ENCODE measurements at regions of chr5 and their contacts with region 1.

Region 1: GRCh38 chr5:131634996-131635754 is at the start of gene RAPGEF6:
- DNase-seq: peak; percentile 97
- H3K4me3 Mint-ChIP-seq: peak within 1 kb of the TSS; percentile 98
- H3K27ac Mint-ChIP-seq: peak within 1 kb of the TSS; percentile 97
- H3K4me1 Mint-ChIP-seq: peaks cover 33% of the 10 kb centered on the region
- H3K27me3 Mint-ChIP-seq: no peaks in the 10 kb centered on the region
- total RNA-seq, gene RAPGEF6: 36.7 and 42.8 TPM in 2 replicates

Region 2: DNA sequence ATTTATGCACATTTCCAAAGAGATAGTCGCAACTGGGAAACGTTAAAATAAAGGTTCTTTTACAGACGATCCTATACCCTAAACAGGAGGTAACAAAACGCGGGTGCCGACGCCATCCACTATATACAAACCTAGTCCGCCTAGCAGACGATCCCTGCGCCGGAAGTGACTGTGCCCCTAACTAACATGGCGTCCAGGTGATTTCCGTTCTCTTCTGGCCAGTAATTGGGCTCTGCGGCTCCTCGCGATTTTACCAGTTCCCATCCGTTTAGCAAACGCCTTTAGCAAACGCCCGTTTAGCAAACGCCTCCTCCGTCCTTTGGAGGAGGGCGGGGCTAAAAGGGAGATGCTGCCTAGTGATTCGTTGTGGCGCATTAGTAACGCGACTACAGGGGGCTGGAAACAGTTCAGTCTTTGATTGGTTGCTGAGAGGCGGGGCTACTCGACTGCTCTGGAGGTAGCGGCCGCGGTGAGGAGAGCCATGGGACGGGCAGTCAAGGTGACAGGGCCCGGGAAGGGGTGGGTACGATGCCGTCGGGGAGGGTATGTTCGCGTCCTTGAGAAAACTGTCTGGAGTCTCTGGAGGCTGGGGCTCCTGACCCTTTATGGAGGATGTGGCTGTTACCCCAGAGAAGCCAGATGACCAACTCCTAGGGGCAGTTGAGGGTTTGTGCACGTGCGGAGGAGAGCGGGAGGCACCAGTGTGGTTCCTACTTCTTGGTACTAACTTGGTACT is 464.5 kb before region 1 on chr5 and contains the start of gene LYRM7:
- intact Hi-C with region 1: loop called (anchors 1 kb)
- DNase-seq: peak; percentile 96
- H3K4me3 Mint-ChIP-seq: peak within 1 kb of the TSS; percentile 99
- H3K27ac Mint-ChIP-seq: peak within 1 kb of the TSS; percentile 98
- H3K4me1 Mint-ChIP-seq: peaks cover 51% of the 10 kb centered on the region
- H3K27me3 Mint-ChIP-seq: no peaks in the 10 kb centered on the region
- total RNA-seq, gene LYRM7: 13.7 and 15.8 TPM in 2 replicates

Region 3: DNA sequence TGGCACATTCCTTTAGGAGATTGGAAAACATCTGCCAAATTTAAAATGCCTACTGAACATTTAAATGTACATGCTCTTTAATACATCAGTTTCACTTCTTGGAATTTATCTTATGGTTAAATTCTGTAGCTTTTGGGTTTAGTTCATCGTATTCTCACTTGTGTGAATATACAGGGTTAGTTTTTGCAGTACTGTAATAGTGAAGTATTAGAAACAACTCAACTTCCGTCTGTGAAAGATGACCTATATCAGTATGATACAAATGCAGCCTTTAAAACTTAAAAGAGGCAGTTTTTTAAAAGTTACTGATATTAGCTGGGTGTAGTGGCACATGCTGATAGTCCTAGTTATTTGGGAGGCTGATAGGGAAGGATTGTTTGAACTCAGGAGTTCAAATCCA is 314.1 kb before region 1 on chr5:
- intact Hi-C with region 1: no loop called
- DNase-seq: no peak
- H3K4me3 Mint-ChIP-seq: no peak overlapping the region
- H3K27ac Mint-ChIP-seq: no peak overlapping the region
- H3K4me1 Mint-ChIP-seq: peaks cover 74% of the 10 kb centered on the region
- H3K27me3 Mint-ChIP-seq: no peaks in the 10 kb centered on the region

Region 4: DNA sequence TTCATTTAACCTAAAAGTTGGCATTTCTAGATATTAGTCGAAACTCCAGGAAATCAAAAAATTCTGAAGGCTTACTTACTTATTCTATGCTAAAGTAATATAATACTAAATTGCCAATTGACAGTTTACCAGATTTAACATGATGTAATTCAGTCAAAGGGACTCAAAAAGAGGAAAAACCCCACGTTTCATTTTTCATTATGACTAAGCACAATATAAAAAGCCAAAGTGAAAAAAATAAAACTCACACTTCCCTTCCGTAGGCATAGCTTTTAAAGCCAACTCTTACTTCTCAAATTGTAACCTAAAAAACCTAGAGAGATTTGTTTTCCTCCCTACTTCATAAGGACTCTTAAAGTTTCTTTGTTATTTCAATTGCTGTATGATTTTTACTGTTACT is 146.7 kb before region 1 on chr5:
- intact Hi-C with region 1: loop called (anchors 2 kb)
- DNase-seq: no peak
- H3K4me3 Mint-ChIP-seq: no peak overlapping the region
- H3K27ac Mint-ChIP-seq: no peak overlapping the region
- H3K4me1 Mint-ChIP-seq: peaks cover 16% of the 10 kb centered on the region
- H3K27me3 Mint-ChIP-seq: no peaks in the 10 kb centered on the region

Region 5: DNA sequence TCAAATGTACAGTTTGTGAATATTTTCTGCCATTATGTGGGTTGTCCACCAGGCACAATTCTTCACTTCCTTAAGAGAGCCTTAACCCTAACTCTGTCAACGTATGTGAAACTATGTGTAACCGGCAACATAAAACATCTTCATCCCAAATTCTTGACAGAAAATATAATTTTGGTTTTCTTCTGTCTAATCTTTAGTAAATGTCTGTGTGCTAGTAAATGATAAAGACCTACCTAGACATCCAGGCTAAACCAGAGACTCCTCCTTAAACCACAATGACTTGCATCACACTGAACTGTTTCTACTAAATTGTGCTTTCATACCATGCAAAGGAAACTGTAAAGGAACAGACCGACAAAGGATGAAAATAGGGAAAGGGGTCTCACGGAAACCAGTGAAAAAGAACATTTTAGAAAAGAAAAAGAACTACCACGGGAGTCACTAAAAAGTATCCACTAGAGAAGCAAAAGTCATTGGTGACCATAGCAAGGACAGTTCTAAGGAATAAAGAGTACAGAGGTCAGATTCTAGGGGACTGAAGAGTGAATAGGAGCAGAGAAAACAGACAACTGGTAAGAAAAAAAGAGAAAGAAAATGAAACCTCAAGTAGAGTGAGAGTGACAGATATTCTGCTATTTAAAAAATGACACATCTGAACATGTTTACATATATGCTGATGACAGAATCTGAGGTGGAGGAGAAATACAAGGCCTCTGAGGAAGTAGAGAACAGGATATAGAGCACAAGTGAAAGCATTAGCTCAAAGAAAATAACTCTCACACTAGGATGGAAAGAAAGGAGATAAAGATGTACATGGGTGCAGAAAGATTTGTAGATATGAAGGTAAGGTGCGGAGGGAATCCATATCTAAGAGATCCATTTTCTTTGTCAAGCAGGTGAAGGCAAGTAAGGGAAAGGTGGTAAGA is 112.3 kb after region 1 on chr5:
- intact Hi-C with region 1: loop called (anchors 2 kb)
- DNase-seq: no peak
- H3K4me3 Mint-ChIP-seq: peak overlapping the region; percentile 40
- H3K27ac Mint-ChIP-seq: peak overlapping the region; percentile 85
- H3K4me1 Mint-ChIP-seq: peaks cover 40% of the 10 kb centered on the region
- H3K27me3 Mint-ChIP-seq: no peaks in the 10 kb centered on the region

Region 6: DNA sequence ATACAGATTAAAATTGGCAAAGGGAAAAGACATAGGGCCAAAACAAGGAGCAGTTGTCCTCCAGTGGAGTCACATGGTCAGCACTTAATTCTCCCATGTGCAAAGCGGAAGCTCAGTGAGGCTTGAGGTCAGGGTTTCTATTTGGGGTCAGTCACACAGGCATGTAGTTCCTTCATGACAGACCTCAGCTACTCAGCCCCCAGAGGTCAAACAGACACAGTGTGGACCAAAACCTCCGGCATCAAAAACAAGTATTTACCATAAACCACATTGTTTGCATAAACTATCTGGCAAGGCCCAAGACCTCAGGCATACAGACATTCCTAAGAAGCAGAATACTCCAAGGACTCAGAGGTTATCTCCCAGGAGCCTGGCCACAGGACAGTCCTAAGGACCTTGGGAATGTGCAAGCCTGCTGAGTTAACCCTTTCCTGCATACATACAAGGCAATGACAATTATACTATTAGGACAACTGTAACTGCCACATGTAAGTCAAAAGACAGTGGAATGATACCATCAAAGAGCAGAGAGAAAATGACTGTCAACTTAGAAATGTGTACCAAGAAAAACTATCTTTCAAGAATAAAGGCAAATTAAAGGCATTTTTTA is 190.3 kb after region 1 on chr5:
- intact Hi-C with region 1: no loop called
- DNase-seq: no peak
- H3K4me3 Mint-ChIP-seq: no peak overlapping the region
- H3K27ac Mint-ChIP-seq: no peak overlapping the region
- H3K4me1 Mint-ChIP-seq: peaks cover 8% of the 10 kb centered on the region
- H3K27me3 Mint-ChIP-seq: peaks cover 14% of the 10 kb centered on the region

Region 7: GRCh38 chr5:132064738-132065331 is 429.7 kb after region 1 on chr5:
- intact Hi-C with region 1: loop called (anchors 2 kb)
- DNase-seq: peak; percentile 70
- H3K4me3 Mint-ChIP-seq: no peak overlapping the region
- H3K27ac Mint-ChIP-seq: peak overlapping the region; percentile 83
- H3K4me1 Mint-ChIP-seq: peaks cover 83% of the 10 kb centered on the region
- H3K27me3 Mint-ChIP-seq: peaks cover 3% of the 10 kb centered on the region

Region 8: DNA sequence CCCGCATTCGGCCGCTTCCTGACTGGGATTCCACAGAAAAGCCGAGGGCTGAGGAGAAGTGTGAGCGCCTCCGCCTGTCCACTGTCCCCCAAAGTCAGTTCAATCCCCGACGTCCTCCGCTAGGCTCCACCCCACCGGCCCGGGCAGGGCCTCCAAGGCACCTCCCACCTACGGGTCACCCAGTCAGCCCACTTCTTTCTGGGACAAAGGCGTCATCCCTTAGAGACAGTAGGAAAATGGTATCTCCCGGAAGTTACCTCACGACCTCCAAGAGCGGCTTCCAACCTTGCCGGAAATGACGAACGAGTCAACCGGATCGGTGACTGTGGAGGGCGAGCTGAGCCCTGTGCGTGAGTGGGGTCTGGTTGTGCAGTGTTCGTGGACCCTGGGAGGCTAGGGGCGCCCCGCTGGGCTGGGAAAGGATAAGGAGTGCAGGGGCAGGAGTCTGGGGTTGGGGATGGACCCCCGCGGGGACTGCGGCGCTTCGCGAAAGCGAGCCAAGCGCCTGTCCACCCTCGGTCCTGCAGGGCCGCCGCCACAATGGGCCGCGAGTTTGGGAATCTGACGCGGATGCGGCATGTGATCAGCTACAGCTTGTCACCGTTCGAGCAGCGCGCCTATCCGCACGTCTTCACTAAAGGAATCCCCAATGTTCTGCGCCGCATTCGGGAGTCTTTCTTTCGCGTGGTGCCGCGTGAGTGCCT is 1231.3 kb after region 1 on chr5 and contains the starts of genes GDF9 and UQCRQ:
- intact Hi-C with region 1: loop called (anchors 2 kb)
- DNase-seq: peak; percentile 93
- H3K4me3 Mint-ChIP-seq: peak within 1 kb of the TSS; percentile 95
- H3K27ac Mint-ChIP-seq: peak within 1 kb of the TSS; percentile 99
- H3K4me1 Mint-ChIP-seq: peaks cover 33% of the 10 kb centered on the region
- H3K27me3 Mint-ChIP-seq: no peaks in the 10 kb centered on the region
- total RNA-seq, gene GDF9: 0.32 and 0.57 TPM in 2 replicates
- total RNA-seq, gene UQCRQ: 410 and 425 TPM in 2 replicates

Measured in activated T-helper 1 cell treated with anti-CD3 and anti-CD28 coated beads, Interleukin-12 subunit alpha, Interleukin-12 subunit beta, Interleukin-2, Interleukin-4 antibody, amounts not matched to agents 30 ng/mL and 10 ng/mL and 1 ng/mL, durations not matched to agents 14 hours and 24 hours and 36 hours (primary cell).